ENCODE measurements at regions of chr19 and their contacts with region 1.

Region 1: GRCh38 chr19:48842789-48843162 is 6.5 kb upstream of the HSD17B14 start:
- DNase-seq: peak in 1 of 2 donors; percentile 60
- ATAC-seq: peak; percentile 21 to 68 (median 52)
- H3K4me3 ChIP-seq: no peak overlapping the region
- H3K27ac ChIP-seq: no peak overlapping the region
- H3K4me1 ChIP-seq: no peaks in the 10 kb centered on the region
- H3K27me3 ChIP-seq: no peaks in the 10 kb centered on the region
- CTCF ChIP-seq: peak; percentile 63 to 87 (median 79)

Region 2: GRCh38 chr19:48933382-48933932 is 90.7 kb after region 1 on chr19 and contains the start of gene DHDH:
- intact Hi-C with region 1: no loop called
- DNase-seq: peak; percentile 56 to 67
- ATAC-seq: peak; percentile 63 to 85 (median 79)
- H3K4me3 ChIP-seq: peak within 1 kb of the TSS in 9 of 10 donors; percentile 31 to 61 (median 53)
- H3K27ac ChIP-seq: peak within 1 kb of the TSS in 1 of 10 donors; percentile 34
- H3K4me1 ChIP-seq: peaks cover 0 to 15% (median 11%) of the 10 kb centered on the region in 9 donors
- H3K27me3 ChIP-seq: peaks cover 0 to 19% (median 0%) of the 10 kb centered on the region in 7 donors
- CTCF ChIP-seq: peak in 1 of 9 donors; percentile 11
- total RNA-seq, gene DHDH: 0.51 TPM in 1 of 10 donors, not detected in the others

Region 3: GRCh38 chr19:48970923-48971395 is 128.2 kb after region 1 on chr19:
- intact Hi-C with region 1: loop called in 1 of 10 experiments (anchors 2 kb)
- DNase-seq: peak; percentile 79 to 85
- ATAC-seq: peak; percentile 7 to 69 (median 64)
- H3K4me3 ChIP-seq: no peak overlapping the region
- H3K27ac ChIP-seq: peak overlapping the region in 8 of 10 donors; percentile 3 to 68 (median 35)
- H3K4me1 ChIP-seq: peaks cover 5 to 51% (median 38%) of the 10 kb centered on the region in 9 donors
- H3K27me3 ChIP-seq: no peaks in the 10 kb centered on the region
- CTCF ChIP-seq: peak; percentile 75 to 95 (median 93)

Measured in heart right ventricle (tissue), 16 donors.